ENCODE measurements at regions of chr4 and their contacts with region 1.

Region 1: GRCh38 chr4:21380861-21381260 is 567.7 kb downstream of the KCNIP4 start:
- DNase-seq: no peak
- ATAC-seq: no peak
- H3K4me3 ChIP-seq: no peak overlapping the region
- H3K4me3 Mint-ChIP-seq: no peak overlapping the region
- H3K27ac ChIP-seq: no peak overlapping the region
- H3K27ac Mint-ChIP-seq: no peak overlapping the region
- H3K4me1 ChIP-seq: no peaks in the 10 kb centered on the region
- H3K4me1 Mint-ChIP-seq: no peaks in the 10 kb centered on the region
- H3K27me3 ChIP-seq: no peaks in the 10 kb centered on the region
- H3K27me3 Mint-ChIP-seq: no peaks in the 10 kb centered on the region
- CTCF ChIP-seq: no peak

Region 2: DNA sequence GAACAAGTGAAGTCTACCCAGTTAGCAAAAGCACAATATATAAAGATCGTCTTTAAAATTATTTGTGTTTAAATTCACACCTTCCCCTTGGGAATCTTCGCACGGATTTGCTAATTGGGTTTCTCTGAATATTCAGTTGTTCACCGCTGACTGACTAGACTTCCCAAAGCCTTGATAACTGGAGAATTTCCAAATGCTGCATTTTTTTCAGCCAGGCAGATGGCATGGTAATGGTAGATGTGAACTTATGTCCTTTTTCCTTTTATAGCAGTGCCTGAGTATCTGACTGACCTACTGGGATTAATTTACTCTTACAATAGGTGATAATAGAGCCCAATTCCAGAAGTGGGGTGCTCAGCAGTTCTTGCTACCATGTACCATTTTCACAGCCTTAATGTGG is 132.5 kb before region 1 on chr4:
- CTCF ChIA-PET with region 1: no interaction called
- POLR2A ChIA-PET with region 1: no interaction called
- intact Hi-C with region 1: no loop called
- DNase-seq: no peak
- ATAC-seq: no peak
- H3K4me3 ChIP-seq: no peak overlapping the region
- H3K4me3 Mint-ChIP-seq: no peak overlapping the region
- H3K27ac ChIP-seq: no peak overlapping the region
- H3K27ac Mint-ChIP-seq: no peak overlapping the region
- H3K4me1 ChIP-seq: no peaks in the 10 kb centered on the region
- H3K4me1 Mint-ChIP-seq: no peaks in the 10 kb centered on the region
- H3K27me3 ChIP-seq: no peaks in the 10 kb centered on the region
- H3K27me3 Mint-ChIP-seq: no peaks in the 10 kb centered on the region
- CTCF ChIP-seq: no peak

Region 3: GRCh38 chr4:21569638-21570037 is 188.8 kb after region 1 on chr4:
- CTCF ChIA-PET with region 1: no interaction called
- POLR2A ChIA-PET with region 1: no interaction called
- intact Hi-C with region 1: loop called in 1 of 2 experiments (anchors 5 kb)
- DNase-seq: no peak
- ATAC-seq: no peak
- H3K4me3 ChIP-seq: no peak overlapping the region
- H3K4me3 Mint-ChIP-seq: no peak overlapping the region
- H3K27ac ChIP-seq: no peak overlapping the region
- H3K27ac Mint-ChIP-seq: no peak overlapping the region
- H3K4me1 ChIP-seq: no peaks in the 10 kb centered on the region
- H3K4me1 Mint-ChIP-seq: no peaks in the 10 kb centered on the region
- H3K27me3 ChIP-seq: no peaks in the 10 kb centered on the region
- H3K27me3 Mint-ChIP-seq: no peaks in the 10 kb centered on the region
- CTCF ChIP-seq: no peak